Right ventricle myocardium inferior (tissue), 1 donor: ENCODE measurements at regions of chr1 and their contacts with region 1.

Region 1: GRCh38 chr1:10494754-10495474 is 20.2 kb downstream of the PEX14 start:
- DNase-seq: peak; percentile 77
- ATAC-seq: peak; percentile 90

Region 2: DNA sequence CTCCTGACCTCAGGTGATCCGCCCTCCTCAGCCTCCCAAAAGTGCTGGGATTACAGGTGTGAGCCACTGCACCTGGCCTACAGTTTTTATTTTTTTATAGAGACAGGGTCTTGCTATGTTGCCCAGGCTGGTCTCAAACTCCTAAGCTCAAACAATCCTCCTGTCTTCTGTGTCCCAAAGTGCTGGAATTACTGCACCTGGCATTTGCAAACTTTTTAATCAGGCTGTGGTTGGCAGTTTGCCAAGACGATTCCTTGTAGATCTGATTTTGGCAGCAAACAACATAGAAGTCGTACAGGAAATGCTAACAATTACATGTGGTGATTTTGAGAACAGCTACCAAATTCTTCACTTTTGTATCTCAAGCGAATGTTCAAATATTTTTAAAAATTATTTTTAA is 487.7 kb before region 1 on chr1:
- intact Hi-C with region 1: no loop called
- DNase-seq: no peak
- ATAC-seq: no peak

Region 3: GRCh38 chr1:10378081-10378841 is 116.7 kb before region 1 on chr1:
- intact Hi-C with region 1: loop called (anchors 10 kb)
- DNase-seq: peak; percentile 83
- ATAC-seq: peak; percentile 24

Region 4: DNA sequence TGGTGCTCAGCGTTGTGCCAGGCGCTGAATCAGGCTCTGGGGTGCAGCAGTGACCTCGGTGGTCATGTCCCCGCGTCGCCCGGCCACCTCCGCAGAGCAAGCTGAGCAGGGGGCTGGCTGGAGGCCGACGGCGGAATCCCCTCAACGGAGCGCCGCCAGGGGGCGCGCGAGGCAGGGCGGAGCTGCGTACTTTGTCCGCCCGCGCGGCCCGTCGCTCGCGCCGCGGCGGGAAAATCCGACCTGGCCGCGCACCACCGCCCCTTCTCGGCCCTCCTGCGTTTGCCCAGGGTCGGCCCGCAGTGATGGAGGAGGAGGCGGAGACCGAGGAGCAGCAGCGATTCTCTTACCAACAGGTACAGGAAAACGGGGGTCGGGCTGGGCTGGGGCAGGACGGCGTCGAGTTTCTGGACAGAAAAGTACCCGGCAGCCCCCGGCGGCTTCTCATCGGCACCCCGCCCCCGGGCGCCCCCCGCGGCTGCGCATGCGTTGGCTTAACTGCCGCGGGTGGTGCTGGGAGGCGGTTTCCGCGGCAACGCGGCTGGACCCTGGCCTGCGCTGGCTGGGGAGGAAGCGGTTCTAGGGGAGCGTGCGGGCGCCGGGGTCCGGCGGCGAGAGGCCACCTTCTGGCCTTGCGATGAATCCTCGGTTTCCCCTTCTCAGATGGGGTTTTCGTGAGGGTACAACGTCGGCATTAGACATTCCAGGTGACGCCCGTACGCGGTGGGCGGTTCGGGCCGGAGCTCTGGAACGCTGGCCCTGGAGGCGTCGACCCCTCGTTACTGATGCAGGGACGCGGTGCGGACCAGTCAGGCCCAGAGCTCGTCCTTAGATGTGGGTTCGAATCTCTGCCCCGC is 64.5 kb before region 1 on chr1 and contains the start of gene CENPS:
- intact Hi-C with region 1: loop called (anchors 1 kb)
- DNase-seq: peak; percentile 96
- ATAC-seq: peak; percentile 97
- total RNA-seq, gene CENPS: 7.6 TPM

Region 5: GRCh38 chr1:10440794-10441193 is 54.1 kb before region 1 on chr1:
- intact Hi-C with region 1: no loop called
- DNase-seq: no peak
- ATAC-seq: no peak

Region 6: GRCh38 chr1:10530281-10530740 is 35.4 kb after region 1 on chr1:
- intact Hi-C with region 1: no loop called
- DNase-seq: no peak
- ATAC-seq: peak; percentile 30

Region 7: DNA sequence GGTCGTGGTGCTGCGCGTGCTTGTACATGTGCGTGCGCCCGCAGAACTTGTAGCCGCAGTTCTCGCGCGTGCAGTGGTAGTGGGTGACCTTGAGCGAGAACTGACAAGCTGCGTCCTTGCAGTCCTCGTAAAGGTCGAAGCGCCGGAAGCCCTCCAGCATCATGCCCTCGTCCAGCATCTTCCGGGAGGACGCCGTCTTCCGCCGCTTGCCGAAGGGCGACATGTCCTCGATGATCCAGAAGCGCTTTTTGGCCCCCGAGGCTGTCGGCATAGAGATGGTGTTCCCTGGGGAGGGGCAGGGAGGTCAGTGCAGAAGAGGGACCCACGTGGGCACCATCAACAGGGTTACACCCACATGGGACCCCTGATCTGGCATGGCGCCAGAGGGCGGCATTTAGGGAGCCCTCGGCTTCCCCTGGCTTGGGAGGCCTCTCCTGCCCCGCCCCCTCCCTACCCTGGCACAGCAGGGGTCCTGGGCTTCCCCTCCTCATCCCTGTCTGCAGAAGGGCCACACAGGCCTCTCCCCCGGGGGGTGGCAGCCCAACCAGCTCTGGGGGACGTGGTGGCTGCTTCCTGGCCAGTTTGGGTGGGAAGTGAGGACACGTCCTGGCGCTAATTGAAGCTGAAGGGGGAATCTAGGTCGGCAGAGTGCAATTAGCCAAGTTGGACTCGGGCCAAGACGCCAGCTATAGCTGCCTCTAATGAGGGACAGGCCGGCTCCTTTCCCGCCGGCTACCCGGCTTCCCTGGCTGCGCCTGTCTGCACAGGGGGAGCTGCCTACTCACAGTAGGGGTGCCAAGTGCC is 145.1 kb after region 1 on chr1:
- intact Hi-C with region 1: no loop called
- DNase-seq: no peak
- ATAC-seq: peak; percentile 57

Region 8: DNA sequence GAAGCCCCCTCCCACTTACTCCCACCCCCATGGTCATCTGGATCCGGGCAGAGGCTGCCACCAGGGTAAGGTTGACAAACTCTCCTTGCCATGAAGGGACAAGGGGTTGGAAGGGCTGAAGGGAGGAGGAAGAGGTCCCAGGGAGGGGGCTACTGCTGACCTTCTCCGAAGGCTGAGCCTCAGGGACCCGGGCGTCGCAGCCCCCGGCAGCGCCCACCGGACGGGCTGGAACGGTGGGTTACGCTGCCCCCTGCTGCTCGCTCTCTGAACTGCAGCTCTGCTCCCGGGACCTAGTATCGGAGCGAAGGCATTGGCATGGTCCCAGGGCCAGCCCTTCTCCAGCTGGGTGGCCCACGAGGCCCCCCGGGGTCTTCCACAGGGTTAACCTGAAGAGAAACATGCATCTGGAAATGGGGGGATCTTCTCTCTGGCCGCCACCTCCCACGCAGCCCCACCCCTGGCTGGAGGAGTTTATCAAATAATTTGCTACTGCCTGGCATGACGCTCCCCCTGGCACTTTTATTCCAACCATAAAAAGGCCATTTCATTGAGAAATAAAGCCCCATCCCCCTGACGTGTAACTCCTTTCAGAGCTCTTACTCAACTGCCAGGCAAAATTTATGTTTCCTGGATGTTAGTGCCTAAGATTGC is 447.1 kb after region 1 on chr1:
- intact Hi-C with region 1: loop called (anchors 5 kb)
- DNase-seq: no peak
- ATAC-seq: no peak

Region 9: DNA sequence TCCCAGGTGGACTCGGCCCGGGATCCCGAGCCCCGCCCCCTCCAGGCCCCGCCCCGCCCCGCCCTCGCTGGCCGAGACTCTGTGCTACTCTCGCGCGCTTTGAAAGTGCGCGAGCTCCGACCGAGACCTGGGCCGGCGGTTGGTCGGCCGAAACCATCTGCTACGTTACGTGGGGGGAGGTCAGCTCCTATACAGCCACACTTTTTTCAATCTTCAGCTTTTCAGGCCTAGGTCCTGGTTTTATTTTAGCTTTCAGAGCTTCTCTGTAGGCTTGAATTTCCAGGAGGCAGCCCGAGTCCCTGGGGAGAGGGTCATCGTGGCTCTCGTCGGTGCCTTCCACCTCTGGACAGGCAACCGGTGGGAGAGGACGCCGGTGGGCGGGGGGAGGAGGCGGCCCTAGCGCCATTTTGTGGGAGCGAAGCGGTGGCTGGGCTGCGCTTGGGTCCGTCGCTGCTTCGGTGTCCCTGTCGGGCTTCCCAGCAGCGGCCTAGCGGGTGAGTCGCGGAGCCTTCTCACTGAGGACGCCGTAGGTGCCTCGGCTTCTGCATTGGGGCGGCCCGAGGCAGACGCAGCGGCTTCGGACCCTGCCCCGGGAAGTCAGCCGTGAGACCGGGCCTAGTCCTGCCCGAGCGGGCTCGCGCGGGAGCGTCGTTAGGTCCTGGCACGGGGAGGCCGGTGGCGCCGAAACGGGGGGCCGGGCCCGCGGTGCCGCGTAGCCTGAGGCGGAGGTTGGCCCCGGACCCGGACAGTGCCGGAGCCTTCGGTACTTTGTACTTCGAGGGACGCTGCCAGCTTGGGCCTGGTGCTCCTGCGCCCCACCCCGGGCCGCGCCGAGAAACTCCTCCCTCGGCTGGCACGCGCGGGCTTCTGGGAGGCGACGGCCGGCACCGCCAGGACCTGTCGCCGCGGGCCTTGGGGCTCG is 517.6 kb after region 1 on chr1 and contains the start of gene TARDBP:
- intact Hi-C with region 1: loop called (anchors 5 kb)
- DNase-seq: peak; percentile 94
- ATAC-seq: peak; percentile 96
- total RNA-seq, gene TARDBP: 107 TPM